ENCODE measurements at regions of chr6 and their contacts with region 1.

Region 1: GRCh38 chr6:37207903-37208456 is 38.0 kb downstream of the PIM1 start:
- DNase-seq: no peak
- H3K4me3 ChIP-seq: no peak overlapping the region
- H3K27me3 ChIP-seq: no peaks in the 10 kb centered on the region; the same call in 1 of the 2 replicates
- CTCF ChIP-seq: peak; percentile 89

Region 2: DNA sequence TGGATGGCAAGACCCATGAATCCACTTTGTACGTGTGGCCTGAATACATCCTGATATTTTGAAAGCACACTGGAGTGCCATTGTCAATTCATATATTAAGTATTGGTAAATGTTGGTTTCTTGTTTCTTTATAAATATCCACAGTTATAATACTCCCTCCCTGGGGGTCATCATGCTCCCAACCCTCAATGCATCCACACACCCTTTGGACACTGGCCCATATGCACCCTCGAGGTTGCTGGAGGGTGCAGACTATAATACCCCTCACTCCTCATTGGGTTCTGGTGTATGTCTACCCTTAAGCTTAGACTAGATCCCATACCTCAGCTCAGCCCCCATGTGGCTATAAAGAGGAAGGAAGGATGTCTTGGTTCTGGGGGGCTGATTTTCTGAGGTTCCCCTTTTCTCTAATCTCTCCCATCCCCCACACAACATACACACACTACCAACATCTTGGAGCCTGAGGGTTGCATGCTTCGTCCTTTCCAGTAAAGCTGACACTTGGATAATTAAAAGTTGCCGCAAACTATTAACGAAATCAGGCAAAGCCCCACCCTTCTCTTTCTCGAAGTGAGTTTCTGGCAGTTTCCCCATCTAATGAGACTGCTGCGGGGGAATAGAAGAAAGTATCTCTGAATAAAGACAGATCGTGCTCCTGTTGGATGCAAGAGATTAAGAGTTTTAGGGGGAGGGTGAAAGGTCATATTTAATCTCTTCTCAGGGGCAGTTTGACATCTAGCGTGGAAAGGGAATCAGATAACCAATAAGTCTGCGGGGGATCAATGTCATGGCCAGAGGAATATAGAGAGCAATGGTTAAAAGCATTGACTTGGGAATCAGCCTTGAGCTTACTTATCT is 30.7 kb before region 1 on chr6:
- CTCF ChIA-PET with region 1: interaction called, 31 read pairs
- POLR2A ChIA-PET with region 1: no interaction called
- DNase-seq: no peak
- H3K4me3 ChIP-seq: no peak overlapping the region
- H3K27me3 ChIP-seq: no peaks in the 10 kb centered on the region
- CTCF ChIP-seq: peak; percentile 11; the same call in 1 of the 2 replicates

Region 3: DNA sequence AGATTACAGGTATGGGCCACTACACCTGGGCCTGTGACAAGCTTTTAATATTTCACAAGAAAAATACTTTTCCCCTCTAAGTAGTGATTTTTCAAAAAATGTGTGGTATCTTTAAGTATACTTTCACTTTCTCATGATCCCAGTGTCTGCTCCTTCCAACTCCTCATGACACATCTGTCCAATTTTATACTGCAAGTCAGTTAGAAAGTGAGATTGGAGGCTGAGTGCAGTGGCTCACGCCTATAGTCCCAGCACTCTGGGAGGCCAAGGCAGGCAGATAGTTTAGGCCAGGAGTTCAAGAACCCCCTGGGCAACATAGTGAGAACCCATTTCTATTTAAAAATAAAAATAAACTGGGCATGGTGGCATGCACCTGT is 17.8 kb before region 1 on chr6:
- CTCF ChIA-PET with region 1: interaction called, 27 read pairs
- POLR2A ChIA-PET with region 1: no interaction called
- DNase-seq: no peak
- H3K4me3 ChIP-seq: no peak overlapping the region
- H3K27me3 ChIP-seq: no peaks in the 10 kb centered on the region; the same call in 1 of the 2 replicates
- CTCF ChIP-seq: no peak

Region 4: GRCh38 chr6:37221585-37222124 is 13.7 kb after region 1 on chr6:
- CTCF ChIA-PET with region 1: interaction called, 13 read pairs
- POLR2A ChIA-PET with region 1: no interaction called
- DNase-seq: no peak
- H3K4me3 ChIP-seq: peak overlapping the region; percentile 55
- H3K27me3 ChIP-seq: no peaks in the 10 kb centered on the region
- CTCF ChIP-seq: no peak

Region 5: GRCh38 chr6:37279366-37280134 is 71.6 kb after region 1 on chr6:
- CTCF ChIA-PET with region 1: no interaction called
- POLR2A ChIA-PET with region 1: no interaction called
- DNase-seq: peak; percentile 56
- H3K4me3 ChIP-seq: no peak overlapping the region
- H3K27me3 ChIP-seq: no peaks in the 10 kb centered on the region
- CTCF ChIP-seq: no peak

Region 6: GRCh38 chr6:37897321-37897720 is 689.3 kb after region 1 on chr6:
- CTCF ChIA-PET with region 1: no interaction called
- POLR2A ChIA-PET with region 1: no interaction called
- DNase-seq: no peak
- H3K4me3 ChIP-seq: no peak overlapping the region
- H3K27me3 ChIP-seq: no peaks in the 10 kb centered on the region
- CTCF ChIP-seq: no peak

Measured in BJ (cell line).